ENCODE measurements at regions of chr11 and their contacts with region 1.

Region 1: DNA sequence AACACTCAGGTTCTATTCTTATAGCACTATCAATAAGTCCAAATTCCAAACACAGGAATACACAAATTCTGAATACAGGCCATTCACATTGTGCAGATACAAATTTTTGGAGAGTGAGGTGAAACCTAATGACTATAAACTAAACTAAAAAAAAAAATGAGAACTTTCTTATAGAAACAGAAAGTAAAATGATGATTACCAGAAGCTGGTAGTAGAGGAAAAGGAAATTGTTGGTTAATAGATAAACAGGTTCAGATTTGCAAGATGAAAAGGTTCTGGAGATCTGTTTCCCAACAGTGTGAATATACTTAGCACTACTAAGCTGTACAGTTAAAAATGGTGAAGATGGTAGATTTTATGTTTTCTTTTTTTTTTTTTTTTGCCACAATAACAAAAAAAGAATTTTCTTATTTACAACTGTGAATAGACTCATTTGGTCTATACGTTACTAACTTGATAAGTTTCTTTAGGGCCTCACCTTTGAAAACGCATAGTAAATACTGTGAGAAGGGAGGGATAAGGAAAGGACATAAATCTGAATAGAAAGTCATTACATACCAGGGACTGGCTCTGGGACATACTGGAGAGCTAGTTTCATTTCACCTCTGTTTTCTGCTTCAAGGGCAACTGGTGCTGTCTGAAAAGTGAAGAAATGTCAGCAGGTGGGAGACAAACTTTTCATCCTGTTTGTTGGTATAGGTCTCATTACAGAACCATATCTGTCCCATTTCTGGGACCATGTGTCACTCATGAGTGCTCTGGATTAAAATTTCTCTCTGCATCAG is 14.2 kb upstream of the CCDC89 start:
- DNase-seq: no peak
- H3K4me3 Mint-ChIP-seq: peak overlapping the region; percentile 38
- H3K27ac Mint-ChIP-seq: peak overlapping the region; percentile 78
- H3K4me1 Mint-ChIP-seq: peaks cover 49% of the 10 kb centered on the region
- H3K27me3 Mint-ChIP-seq: no peaks in the 10 kb centered on the region

Region 2: GRCh38 chr11:85572056-85572455 is 128.1 kb before region 1 on chr11:
- CTCF ChIA-PET with region 1: no interaction called
- POLR2A ChIA-PET with region 1: no interaction called
- DNase-seq: no peak
- H3K4me3 Mint-ChIP-seq: no peak overlapping the region
- H3K27ac Mint-ChIP-seq: no peak overlapping the region
- H3K4me1 Mint-ChIP-seq: peaks cover 12% of the 10 kb centered on the region
- H3K27me3 Mint-ChIP-seq: peaks cover 1% of the 10 kb centered on the region

Region 3: GRCh38 chr11:85682330-85683305 is 17.5 kb before region 1 on chr11:
- CTCF ChIA-PET with region 1: interaction called, 7 read pairs
- POLR2A ChIA-PET with region 1: interaction called, 13 read pairs
- DNase-seq: peak; percentile 64
- H3K4me3 Mint-ChIP-seq: peak overlapping the region; percentile 71
- H3K27ac Mint-ChIP-seq: peak overlapping the region; percentile 59
- H3K4me1 Mint-ChIP-seq: peaks cover 21% of the 10 kb centered on the region
- H3K27me3 Mint-ChIP-seq: peaks cover 12% of the 10 kb centered on the region